ENCODE measurements at regions of chr1 and their contacts with region 1.

Region 1: DNA sequence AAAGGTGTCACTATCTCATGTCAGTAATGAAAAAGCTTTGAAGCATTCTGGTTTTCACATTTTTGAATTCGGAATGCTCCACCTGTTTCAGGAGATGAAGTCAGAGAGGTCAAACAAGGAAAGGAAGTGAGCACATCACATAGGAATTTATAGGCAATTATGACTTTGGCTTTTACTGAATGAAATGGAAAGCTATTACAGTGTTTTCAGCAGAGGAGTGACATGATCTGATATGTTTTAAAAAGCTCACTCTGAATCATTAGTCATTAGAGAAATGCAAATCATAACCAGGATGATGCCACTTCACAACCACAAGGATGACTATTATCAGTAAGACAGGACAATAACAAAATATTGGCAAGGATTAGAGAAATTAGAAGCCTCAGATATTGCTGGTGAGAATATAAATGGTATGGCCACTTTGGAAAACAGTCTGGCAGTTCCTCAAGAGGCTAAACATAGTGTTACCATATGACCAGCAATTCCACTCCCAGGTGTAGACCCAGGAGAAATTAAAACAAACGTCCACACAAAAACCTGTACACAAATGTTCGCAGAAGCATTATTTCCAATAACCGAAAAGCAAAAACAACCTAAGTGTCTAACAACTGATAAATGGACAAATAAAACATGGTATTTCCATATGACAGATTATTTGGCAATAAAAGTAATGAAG is 7.5 kb downstream of the TAF1A start:
- DNase-seq: peak; percentile 45
- ATAC-seq: peak; percentile 90
- H3K4me3 ChIP-seq: no peak overlapping the region
- H3K27ac ChIP-seq: peak overlapping the region; percentile 17
- H3K4me1 ChIP-seq: peaks cover 25% of the 10 kb centered on the region
- H3K27me3 ChIP-seq: no peaks in the 10 kb centered on the region
- CTCF ChIP-seq: no peak
- EP300 ChIP-seq: no peak
- POLR2A ChIP-seq: no peak
- RAD21 ChIP-seq: no peak

Region 2: DNA sequence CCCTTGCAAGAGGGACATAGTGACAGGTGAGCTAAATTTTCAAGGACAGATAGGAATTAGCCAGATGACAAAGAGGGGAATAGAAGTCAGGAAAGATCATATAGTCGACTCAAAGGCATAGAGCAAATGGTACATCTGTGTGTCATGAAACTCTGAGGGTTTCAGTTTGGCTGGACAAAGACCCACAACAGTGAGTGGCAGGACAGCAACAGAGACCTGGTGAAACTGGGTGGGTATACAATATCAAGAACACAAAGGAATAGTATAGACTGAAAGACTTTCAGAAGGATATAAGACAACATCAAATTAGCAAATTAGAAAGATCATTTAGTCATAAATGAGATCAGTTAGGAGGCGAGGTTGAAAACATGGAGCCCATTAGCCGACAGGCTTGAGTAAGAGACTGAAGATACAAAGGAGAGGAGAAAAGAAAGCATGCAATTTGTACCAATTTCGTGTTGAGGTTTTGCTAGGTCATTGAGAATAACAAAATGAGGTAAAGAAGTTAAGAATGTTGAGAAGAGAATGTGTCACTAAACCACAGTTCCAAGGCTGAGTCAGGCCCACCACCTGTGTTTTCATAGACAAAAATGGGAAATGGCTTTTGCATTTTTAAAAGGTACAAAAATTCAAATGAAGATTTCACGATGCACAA is 248.1 kb before region 1 on chr1:
- CTCF ChIA-PET with region 1: no interaction called
- POLR2A ChIA-PET with region 1: no interaction called
- RAD21 ChIA-PET with region 1: no interaction called
- SMC1A ChIA-PET with region 1: no interaction called
- in situ Hi-C with region 1: no loop called
- intact Hi-C with region 1: no loop called
- DNase-seq: no peak
- ATAC-seq: peak; percentile 64
- H3K4me3 ChIP-seq: no peak overlapping the region
- H3K27ac ChIP-seq: no peak overlapping the region
- H3K4me1 ChIP-seq: no peaks in the 10 kb centered on the region
- H3K27me3 ChIP-seq: no peaks in the 10 kb centered on the region
- CTCF ChIP-seq: no peak
- EP300 ChIP-seq: no peak
- POLR2A ChIP-seq: no peak
- RAD21 ChIP-seq: no peak

Region 3: DNA sequence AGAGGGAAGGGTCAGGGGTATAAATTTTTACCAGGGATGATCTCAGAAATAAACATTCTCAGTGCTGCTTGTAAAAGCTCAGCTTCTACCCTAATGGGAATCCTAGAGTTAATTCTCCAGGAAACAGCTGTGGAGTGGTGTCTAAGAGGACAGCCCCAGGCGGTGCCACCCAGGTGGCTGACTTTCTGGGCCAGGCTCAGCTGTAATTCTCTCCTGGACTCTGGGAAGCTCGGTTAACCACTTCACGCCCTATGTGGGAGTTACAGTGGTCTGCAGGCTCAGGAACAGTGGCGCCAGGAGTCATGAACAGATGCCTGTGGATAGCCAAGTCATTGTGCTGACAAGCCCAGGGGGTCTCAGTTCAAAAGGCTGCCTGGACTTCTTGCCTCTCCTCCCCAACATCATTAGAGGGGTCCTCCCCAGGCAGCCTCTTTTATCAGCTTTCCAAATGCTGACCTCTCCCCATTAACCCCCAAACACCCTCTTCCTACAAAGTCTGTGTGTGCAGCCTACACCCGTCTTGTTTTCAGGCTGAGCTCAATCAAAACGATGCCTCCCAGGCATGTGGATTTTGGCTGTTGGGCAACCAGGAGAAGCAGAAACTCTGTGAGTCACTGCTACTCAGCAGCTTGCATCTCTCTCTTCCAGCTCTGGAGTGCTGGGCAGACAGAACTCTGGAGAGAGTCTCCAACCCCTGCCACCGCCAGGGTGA is 35.5 kb before region 1 on chr1:
- CTCF ChIA-PET with region 1: no interaction called
- POLR2A ChIA-PET with region 1: no interaction called
- RAD21 ChIA-PET with region 1: no interaction called
- SMC1A ChIA-PET with region 1: no interaction called
- in situ Hi-C with region 1: no loop called
- intact Hi-C with region 1: no loop called
- DNase-seq: no peak
- ATAC-seq: no peak
- H3K4me3 ChIP-seq: no peak overlapping the region
- H3K27ac ChIP-seq: no peak overlapping the region
- H3K4me1 ChIP-seq: no peaks in the 10 kb centered on the region
- H3K27me3 ChIP-seq: no peaks in the 10 kb centered on the region
- CTCF ChIP-seq: no peak
- EP300 ChIP-seq: no peak
- POLR2A ChIP-seq: no peak
- RAD21 ChIP-seq: no peak

Region 4: GRCh38 chr1:222617367-222617951 is 35.2 kb after region 1 on chr1:
- CTCF ChIA-PET with region 1: no interaction called
- POLR2A ChIA-PET with region 1: interaction called, 3 read pairs
- RAD21 ChIA-PET with region 1: no interaction called
- SMC1A ChIA-PET with region 1: interaction called, 9 read pairs
- in situ Hi-C with region 1: no loop called
- intact Hi-C with region 1: loop called (anchors 5 kb)
- DNase-seq: peak; percentile 61
- ATAC-seq: peak; percentile 87
- H3K4me3 ChIP-seq: peak overlapping the region; percentile 67
- H3K27ac ChIP-seq: peak overlapping the region; percentile 23
- H3K4me1 ChIP-seq: peaks cover 7% of the 10 kb centered on the region; the same call in 1 of the 2 replicates
- H3K27me3 ChIP-seq: no peaks in the 10 kb centered on the region; a peak in 1 of 4 replicates
- CTCF ChIP-seq: no peak
- EP300 ChIP-seq: no peak
- POLR2A ChIP-seq: peak; percentile 76
- RAD21 ChIP-seq: no peak

Region 5: GRCh38 chr1:222654849-222655248 is 72.6 kb after region 1 on chr1:
- CTCF ChIA-PET with region 1: no interaction called
- POLR2A ChIA-PET with region 1: no interaction called
- RAD21 ChIA-PET with region 1: no interaction called
- SMC1A ChIA-PET with region 1: no interaction called
- in situ Hi-C with region 1: no loop called
- intact Hi-C with region 1: no loop called
- DNase-seq: peak; percentile 72
- ATAC-seq: peak; percentile 98
- H3K4me3 ChIP-seq: no peak overlapping the region
- H3K27ac ChIP-seq: no peak overlapping the region
- H3K4me1 ChIP-seq: peaks cover 30% of the 10 kb centered on the region
- H3K27me3 ChIP-seq: no peaks in the 10 kb centered on the region
- CTCF ChIP-seq: peak; percentile 24 to 38 (median 36); a peak in 5 of 6 replicates
- EP300 ChIP-seq: peak; percentile 42 to 56; a peak in 2 of 4 replicates
- POLR2A ChIP-seq: no peak
- RAD21 ChIP-seq: peak; percentile 49

Measured in GM12878 (cell line).